ENCODE measurements at regions of chr1 and their contacts with region 1.

Region 1: GRCh38 chr1:212455803-212456528 is 23.2 kb downstream of the NENF start:
- DNase-seq: peak; percentile 89
- ATAC-seq: peak; percentile 78
- H3K4me3 Mint-ChIP-seq: no peak overlapping the region
- H3K27ac Mint-ChIP-seq: no peak overlapping the region
- H3K4me1 Mint-ChIP-seq: peaks cover 15% of the 10 kb centered on the region
- H3K27me3 Mint-ChIP-seq: no peaks in the 10 kb centered on the region

Region 2: DNA sequence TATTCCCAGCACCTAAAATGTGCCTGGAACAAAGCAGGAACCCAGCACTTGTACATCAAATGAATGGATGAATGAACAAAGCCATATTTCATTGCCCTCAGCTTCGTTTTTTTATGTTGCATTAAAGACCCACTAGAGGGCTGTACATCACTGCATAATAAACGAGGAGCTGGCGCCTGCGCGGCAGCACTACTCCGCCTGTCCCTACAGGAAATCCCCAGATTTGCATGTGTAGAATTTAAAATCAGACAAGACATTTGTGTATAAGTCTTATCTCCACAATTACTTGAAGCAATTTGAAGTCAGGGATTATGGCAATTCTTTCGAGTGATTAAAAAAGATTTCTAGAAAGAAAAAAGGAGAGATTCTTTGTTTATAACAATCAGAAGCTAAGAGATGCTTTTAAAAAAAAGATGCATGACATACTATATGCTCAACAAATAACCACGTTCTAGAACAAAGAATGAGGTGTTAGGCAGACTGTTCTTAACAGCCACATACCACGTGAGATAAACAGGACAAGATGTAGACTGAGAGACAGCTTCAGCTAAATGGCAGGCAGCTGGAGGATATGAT is 775.1 kb before region 1 on chr1:
- CTCF ChIA-PET with region 1: interaction called, 88 read pairs
- POLR2A ChIA-PET with region 1: no interaction called
- DNase-seq: peak; percentile 85
- ATAC-seq: peak; percentile 90
- H3K4me3 Mint-ChIP-seq: no peak overlapping the region
- H3K27ac Mint-ChIP-seq: peak overlapping the region; percentile 11
- H3K4me1 Mint-ChIP-seq: peaks cover 13% of the 10 kb centered on the region
- H3K27me3 Mint-ChIP-seq: peaks cover 3% of the 10 kb centered on the region

Region 3: GRCh38 chr1:212070720-212071302 is 385.2 kb before region 1 on chr1:
- CTCF ChIA-PET with region 1: interaction called, 132 read pairs
- POLR2A ChIA-PET with region 1: no interaction called
- DNase-seq: no peak
- ATAC-seq: peak; percentile 63
- H3K4me3 Mint-ChIP-seq: no peak overlapping the region
- H3K27ac Mint-ChIP-seq: no peak overlapping the region
- H3K4me1 Mint-ChIP-seq: no peaks in the 10 kb centered on the region
- H3K27me3 Mint-ChIP-seq: no peaks in the 10 kb centered on the region

Region 4: DNA sequence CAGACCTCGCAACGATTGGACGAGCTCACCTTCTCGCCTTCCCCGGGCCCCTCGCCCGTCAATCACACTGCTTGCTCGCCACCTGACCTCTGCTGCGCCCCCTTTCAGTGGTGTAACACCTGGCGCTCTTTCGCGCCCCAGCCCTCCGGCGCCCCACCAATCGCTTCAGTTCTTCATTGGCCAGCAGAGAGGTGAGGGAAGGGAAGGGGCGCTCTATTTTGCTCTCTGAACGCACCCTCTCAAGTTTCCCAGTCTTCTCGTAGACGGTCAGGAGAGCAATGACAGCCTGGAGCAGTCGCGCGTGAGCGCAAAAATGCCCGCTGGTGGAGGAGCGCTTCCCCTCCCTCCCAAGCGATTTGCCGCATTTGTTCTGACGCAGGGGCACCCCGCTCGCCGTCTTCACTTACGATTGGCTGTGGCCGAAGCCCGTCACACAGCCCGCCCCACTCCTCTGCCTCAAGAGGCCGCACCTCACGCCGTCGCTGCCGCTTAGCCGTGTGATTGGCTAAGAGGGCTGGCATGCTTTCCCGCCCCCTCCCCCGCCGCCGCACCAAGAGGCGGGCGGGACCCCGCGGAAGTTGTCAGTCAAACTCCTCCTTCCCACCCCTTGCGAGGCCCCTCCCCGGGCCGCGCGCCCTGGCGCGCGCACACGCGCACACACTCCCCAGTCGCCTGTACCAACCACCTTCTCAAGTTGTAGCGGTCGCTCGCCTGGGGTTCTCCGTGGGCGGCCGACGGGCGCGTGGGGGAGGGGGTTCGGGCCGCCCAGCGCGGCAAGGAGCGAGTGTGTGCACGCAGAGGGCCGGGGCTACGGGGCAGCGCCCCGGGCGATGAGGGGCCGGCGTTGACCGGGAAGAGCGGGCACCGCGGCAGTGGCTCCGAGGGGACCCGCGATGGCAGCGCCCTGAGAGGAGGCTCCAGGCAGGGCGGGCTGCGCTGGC is 171.0 kb before region 1 on chr1 and contains the start of gene PPP2R5A:
- CTCF ChIA-PET with region 1: interaction called, 60 read pairs
- POLR2A ChIA-PET with region 1: no interaction called
- DNase-seq: peak; percentile 99
- ATAC-seq: peak; percentile 94
- H3K4me3 Mint-ChIP-seq: peak within 1 kb of the TSS; percentile 99
- H3K27ac Mint-ChIP-seq: peak within 1 kb of the TSS; percentile 99
- H3K4me1 Mint-ChIP-seq: peaks cover 37% of the 10 kb centered on the region
- H3K27me3 Mint-ChIP-seq: no peaks in the 10 kb centered on the region
- total RNA-seq, gene PPP2R5A: 66.7 to 72.3 TPM

Region 5: GRCh38 chr1:212323066-212323465 is 132.9 kb before region 1 on chr1:
- CTCF ChIA-PET with region 1: no interaction called
- POLR2A ChIA-PET with region 1: no interaction called
- DNase-seq: no peak
- ATAC-seq: no peak
- H3K4me3 Mint-ChIP-seq: no peak overlapping the region
- H3K27ac Mint-ChIP-seq: no peak overlapping the region
- H3K4me1 Mint-ChIP-seq: peaks cover 5% of the 10 kb centered on the region
- H3K27me3 Mint-ChIP-seq: no peaks in the 10 kb centered on the region

Region 6: DNA sequence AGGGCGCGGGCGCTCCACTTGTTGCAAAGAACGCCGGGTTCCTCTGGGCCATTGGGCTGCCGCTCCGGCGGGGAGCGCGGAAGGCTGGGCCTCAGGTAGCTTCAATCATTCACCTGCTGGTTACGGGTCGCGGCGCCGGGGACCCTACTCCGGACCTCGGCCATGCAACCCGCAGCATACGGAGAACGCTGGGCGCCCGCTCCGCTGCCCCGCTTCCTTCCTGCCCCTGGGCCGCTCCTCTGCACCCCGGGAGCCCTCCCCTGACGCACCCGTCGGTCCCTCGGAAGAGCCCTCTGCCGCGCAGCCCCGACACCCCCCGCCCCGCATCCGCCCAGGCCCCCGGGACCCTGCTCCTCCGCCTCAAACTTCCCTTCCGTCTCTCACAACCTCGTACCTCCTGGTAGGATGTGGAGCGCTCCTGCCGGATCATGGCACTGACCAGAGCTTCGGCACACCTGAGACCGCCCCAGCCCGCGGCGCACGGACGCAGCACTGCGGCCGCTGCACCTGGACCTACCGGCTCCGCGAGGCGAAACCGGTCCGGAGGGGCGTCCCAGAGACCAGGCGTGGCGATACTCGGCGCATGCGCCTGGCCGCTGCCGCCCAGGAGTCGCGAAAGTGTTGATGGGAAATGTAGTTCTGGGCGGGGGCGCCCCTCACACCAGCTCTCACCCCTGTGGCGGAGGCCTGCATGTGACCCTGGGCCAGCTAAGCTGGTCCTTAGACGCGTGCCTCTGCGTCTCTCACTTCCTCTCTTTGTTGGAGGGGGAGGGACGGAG is 41.4 kb before region 1 on chr1 and contains the start of gene PACC1:
- CTCF ChIA-PET with region 1: interaction called, 19 read pairs
- POLR2A ChIA-PET with region 1: no interaction called
- DNase-seq: peak; percentile 94
- ATAC-seq: peak; percentile 97
- H3K4me3 Mint-ChIP-seq: peak within 1 kb of the TSS; percentile 98
- H3K27ac Mint-ChIP-seq: peak within 1 kb of the TSS; percentile 94
- H3K4me1 Mint-ChIP-seq: peaks cover 36% of the 10 kb centered on the region
- H3K27me3 Mint-ChIP-seq: no peaks in the 10 kb centered on the region
- total RNA-seq, gene PACC1: 10.0 to 13.2 TPM

Region 7: DNA sequence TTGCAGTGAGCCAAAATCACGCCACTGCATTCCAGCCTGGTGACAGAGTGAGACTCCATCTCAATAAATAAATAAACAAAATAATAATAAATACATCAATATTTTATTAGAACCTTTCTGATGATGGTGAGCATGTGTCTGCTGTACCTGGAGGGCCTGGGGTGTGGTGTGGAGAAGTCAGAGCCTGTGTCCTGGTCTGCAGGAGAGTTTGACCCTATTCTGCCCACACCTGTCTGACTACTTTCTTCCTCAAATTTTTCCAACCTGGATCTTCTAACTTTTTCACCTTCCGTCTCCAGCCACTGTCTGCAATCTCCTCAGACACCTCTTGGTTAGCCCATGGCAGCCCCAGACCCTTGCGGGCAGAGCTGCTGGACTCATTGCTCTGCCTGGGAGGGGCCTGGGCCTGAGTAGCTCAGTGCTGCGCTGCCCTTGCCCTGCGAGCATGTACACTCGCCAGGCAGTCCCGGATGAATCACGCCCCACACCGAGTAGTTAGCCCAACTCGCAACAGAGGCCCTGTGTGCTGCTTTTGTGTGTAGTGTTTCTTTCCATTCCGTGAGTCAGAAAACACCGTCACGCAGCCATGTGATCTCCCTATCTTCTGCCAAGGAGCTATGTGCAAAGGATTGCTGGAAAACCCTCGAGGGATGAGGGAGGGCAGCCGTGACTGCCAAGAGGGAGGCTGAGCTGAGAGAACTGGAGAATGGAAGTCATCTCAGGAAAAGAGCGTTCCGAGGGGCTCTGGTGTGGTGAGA is 13.9 kb after region 1 on chr1:
- CTCF ChIA-PET with region 1: interaction called, 42 read pairs
- POLR2A ChIA-PET with region 1: no interaction called
- DNase-seq: no peak
- ATAC-seq: no peak
- H3K4me3 Mint-ChIP-seq: no peak overlapping the region
- H3K27ac Mint-ChIP-seq: no peak overlapping the region
- H3K4me1 Mint-ChIP-seq: peaks cover 10% of the 10 kb centered on the region
- H3K27me3 Mint-ChIP-seq: peaks cover 2% of the 10 kb centered on the region

Region 8: DNA sequence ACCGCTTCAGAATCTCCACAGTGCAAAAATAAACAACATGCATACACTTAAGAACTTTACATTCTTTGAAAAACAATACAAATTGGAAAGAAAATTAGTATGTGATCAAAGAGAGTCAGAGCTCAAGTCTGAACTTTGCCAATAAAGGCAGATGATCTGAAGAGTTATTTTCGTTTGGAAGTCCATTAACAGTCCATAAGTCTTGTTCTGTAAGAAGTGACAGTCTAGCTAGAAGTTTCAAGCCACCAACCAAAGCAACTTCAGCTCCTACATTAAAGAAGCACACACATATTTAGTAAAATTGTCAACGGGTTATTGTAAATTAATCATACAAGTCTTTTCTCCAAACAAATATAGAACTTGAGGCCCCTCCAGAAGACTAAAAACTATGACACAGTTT is 539.0 kb after region 1 on chr1:
- CTCF ChIA-PET with region 1: interaction called, 17 read pairs
- POLR2A ChIA-PET with region 1: no interaction called
- DNase-seq: no peak
- ATAC-seq: no peak
- H3K4me3 Mint-ChIP-seq: no peak overlapping the region
- H3K27ac Mint-ChIP-seq: no peak overlapping the region
- H3K4me1 Mint-ChIP-seq: peaks cover 1% of the 10 kb centered on the region
- H3K27me3 Mint-ChIP-seq: no peaks in the 10 kb centered on the region

Measured in activated CD8-positive, alpha-beta T cell treated with anti-CD3 and anti-CD28 coated beads, Interleukin-2, amount 10 ng/mL, durations not matched to agents 7 days and 5 days (primary cell).